Activated CD4-positive, alpha-beta T cell treated with anti-CD3 and anti-CD28 coated beads, Interleukin-2, amount 10 ng/mL, durations not matched to agents 24 days and 14 days (primary cell): ENCODE measurements at regions of chr2 and their contacts with region 1.

Region 1: GRCh38 chr2:217785544-217786045 is 217.2 kb downstream of the TNS1 start:
- DNase-seq: peak; percentile 92
- H3K4me3 Mint-ChIP-seq: no peak overlapping the region
- H3K27ac Mint-ChIP-seq: no peak overlapping the region
- H3K4me1 Mint-ChIP-seq: peaks cover 22% of the 10 kb centered on the region
- H3K27me3 Mint-ChIP-seq: peaks cover 10% of the 10 kb centered on the region

Region 2: DNA sequence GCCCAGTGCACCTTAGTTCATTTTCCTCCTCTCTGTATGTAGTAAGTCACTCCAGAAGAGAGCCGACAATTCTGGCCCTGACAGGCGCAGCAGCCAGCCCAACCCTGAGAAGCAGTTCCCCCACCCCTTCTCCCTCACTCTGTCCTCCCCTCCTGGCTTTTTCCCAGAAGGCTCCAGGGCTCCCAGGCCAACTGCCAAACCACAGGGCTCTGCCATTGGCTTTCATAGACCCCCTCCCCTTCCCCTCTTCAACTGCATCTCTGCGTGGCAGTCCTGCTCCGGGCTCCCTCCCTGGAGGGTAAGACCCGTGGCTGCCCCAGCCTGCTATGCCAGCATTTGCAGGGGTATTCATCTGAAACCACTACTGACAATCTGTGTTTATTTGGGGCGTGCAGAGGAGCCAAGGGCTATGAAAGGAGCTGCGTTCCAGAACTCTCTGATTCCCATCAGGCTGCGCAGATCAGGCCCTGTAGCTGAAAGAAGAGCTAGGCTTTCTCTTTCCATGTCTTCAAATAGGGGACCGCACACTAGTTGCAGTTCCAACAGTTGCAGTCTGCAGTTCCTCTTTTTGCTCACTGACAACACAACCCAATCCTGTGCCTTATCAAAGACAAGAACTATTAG is 537.2 kb before region 1 on chr2:
- intact Hi-C with region 1: no loop called
- DNase-seq: no peak
- H3K4me3 Mint-ChIP-seq: no peak overlapping the region
- H3K27ac Mint-ChIP-seq: no peak overlapping the region
- H3K4me1 Mint-ChIP-seq: peaks cover 4% of the 10 kb centered on the region
- H3K27me3 Mint-ChIP-seq: peaks cover 8% of the 10 kb centered on the region

Region 3: DNA sequence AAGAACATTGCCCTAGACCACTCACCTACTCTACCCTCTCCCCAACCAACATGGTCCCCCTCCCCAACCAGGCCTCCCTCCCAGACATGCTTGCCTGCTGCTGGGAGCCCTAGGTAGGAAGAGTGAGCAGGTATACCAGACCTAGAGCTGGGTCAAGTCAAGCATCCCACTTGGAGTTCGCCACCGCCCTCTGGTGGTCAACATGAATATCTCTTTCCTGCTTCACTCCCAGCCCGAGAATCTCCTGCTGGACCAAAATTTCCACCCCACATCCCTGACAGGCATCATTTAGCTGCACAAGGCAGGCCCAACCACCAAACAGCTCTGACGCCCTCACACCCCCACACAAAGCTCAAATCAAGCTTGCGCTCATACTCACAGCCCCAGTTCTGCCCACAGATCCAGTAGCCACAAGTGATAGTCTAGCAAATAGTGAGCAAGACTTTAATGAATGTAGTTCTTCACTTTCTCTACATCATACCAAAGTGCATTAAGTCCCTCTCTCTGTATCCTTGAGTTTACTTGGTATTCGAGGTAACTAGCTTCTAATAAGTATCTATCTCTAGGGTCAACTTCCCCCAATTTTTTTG is 101.2 kb after region 1 on chr2:
- intact Hi-C with region 1: loop called (anchors 1 kb)
- DNase-seq: peak; percentile 88
- H3K4me3 Mint-ChIP-seq: no peak overlapping the region
- H3K27ac Mint-ChIP-seq: no peak overlapping the region
- H3K4me1 Mint-ChIP-seq: peaks cover 2% of the 10 kb centered on the region
- H3K27me3 Mint-ChIP-seq: no peaks in the 10 kb centered on the region

Region 4: GRCh38 chr2:217988014-217988839 is 202.6 kb after region 1 on chr2:
- intact Hi-C with region 1: loop called (anchors 1 kb)
- DNase-seq: peak; percentile 92
- H3K4me3 Mint-ChIP-seq: no peak overlapping the region
- H3K27ac Mint-ChIP-seq: no peak overlapping the region
- H3K4me1 Mint-ChIP-seq: peaks cover 8% of the 10 kb centered on the region
- H3K27me3 Mint-ChIP-seq: peaks cover 2% of the 10 kb centered on the region

Region 5: GRCh38 chr2:217993817-217994463 is 208.3 kb after region 1 on chr2:
- intact Hi-C with region 1: loop called (anchors 1 kb)
- DNase-seq: peak; percentile 85
- H3K4me3 Mint-ChIP-seq: no peak overlapping the region
- H3K27ac Mint-ChIP-seq: no peak overlapping the region
- H3K4me1 Mint-ChIP-seq: peaks cover 3% of the 10 kb centered on the region
- H3K27me3 Mint-ChIP-seq: peaks cover 2% of the 10 kb centered on the region

Region 6: DNA sequence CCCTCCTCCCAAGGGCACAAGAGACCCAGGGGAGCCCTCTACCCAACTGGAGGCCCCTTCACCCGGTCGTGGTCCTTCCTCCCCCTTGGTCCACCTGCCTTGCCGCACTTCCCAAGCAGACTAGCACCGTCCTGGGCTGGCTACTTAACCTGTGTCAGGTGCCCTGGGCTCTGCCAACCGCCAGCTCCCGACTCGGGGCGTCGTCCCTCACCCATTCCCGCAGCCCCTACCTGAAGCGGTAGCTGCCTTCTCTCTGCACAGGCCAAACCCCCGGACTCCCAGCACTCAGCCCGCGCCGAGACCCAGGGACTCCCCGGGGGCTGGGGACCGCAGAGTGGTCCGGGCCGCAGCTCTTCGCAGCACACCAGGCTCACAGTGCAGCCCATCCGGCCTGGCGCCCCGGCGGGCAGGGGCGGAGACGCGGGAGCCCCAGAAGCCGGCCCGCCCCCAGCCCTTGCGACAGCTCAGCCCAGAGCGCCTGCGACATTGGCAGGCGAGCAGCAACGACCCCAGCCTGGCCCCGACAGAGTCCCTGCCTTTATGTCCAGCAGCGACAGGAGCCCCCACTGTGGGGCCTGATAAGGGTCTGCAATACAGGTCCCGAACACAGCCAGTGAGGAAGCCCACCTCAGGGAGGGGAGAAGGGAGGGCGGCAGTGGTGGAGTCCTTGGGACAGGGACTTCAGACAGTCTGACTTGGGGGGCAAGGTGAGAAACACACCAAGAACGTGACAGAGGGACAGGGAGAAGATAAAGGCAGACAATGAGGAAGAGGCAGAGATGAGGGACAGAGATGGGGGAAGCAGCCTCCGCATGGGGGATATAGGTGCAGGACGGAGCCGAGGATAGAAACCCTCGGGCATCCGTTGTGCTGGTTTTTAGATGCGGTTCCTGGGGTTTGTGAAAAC is 248.2 kb after region 1 on chr2:
- intact Hi-C with region 1: loop called (anchors 1 kb)
- DNase-seq: no peak
- H3K4me3 Mint-ChIP-seq: peak overlapping the region; percentile 72
- H3K27ac Mint-ChIP-seq: peak overlapping the region; percentile 14
- H3K4me1 Mint-ChIP-seq: peaks cover 18% of the 10 kb centered on the region
- H3K27me3 Mint-ChIP-seq: peaks cover 2% of the 10 kb centered on the region

Region 7: GRCh38 chr2:218069606-218070300 is 284.2 kb after region 1 on chr2:
- intact Hi-C with region 1: loop called (anchors 2 kb)
- DNase-seq: no peak
- H3K4me3 Mint-ChIP-seq: no peak overlapping the region
- H3K27ac Mint-ChIP-seq: no peak overlapping the region
- H3K4me1 Mint-ChIP-seq: peaks cover 21% of the 10 kb centered on the region
- H3K27me3 Mint-ChIP-seq: peaks cover 6% of the 10 kb centered on the region